ENCODE measurements at regions of chr9 and their contacts with region 1.

Region 1: DNA sequence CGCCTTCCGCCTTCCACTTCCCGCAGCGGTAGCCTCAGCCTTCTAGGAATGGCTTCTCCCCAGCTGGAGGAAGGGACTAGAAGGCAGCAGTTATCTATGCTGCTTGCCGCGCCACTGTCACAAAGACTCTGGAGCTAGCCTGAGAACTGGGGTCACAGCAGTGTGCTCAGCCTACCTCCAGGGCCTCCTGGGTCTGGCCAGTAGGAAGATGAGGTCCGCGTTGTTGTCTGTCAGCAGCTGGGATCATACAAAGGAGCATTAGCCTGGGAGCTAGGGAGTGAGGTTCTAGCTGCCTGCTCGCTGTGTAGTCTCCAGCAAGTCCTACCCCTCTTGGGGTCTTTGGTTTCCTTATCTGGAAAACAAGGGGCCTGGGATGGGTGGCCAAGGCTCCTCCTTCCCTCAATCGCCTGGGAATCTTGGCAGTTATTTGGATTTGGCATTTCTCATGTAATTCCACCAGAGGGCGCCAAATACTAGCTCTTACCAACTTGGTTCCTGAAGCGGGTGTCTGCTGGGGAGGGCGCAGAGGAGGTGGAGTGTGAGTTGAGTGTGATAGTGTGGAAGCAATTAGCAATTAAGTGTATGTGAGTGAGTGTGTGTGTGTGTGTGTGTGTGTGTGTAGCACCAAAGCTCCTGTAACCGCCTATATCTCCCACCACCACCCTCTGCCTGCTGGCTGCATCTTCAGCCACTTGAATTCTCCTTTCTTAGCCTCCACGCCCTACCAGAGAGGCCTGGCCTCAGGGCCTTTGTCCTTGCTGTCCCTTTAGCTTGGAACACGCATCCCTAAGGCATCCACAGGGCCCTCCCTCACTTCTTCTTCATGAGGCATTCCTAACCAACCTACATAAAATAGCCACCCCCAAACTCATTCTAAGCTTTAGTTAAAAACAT is 97.1 kb downstream of the ENTREP1 start:
- DNase-seq: peak; percentile 5
- H3K4me3 ChIP-seq: no peak overlapping the region
- H3K27me3 ChIP-seq: no peaks in the 10 kb centered on the region
- CTCF ChIP-seq: peak; percentile 65

Region 2: GRCh38 chr9:69382135-69382534 is 40.0 kb before region 1 on chr9:
- CTCF ChIA-PET with region 1: no interaction called
- POLR2A ChIA-PET with region 1: no interaction called
- DNase-seq: no peak
- H3K4me3 ChIP-seq: no peak overlapping the region
- H3K27me3 ChIP-seq: 0 out of 2 replicates have a peak, but pooled peaks cover 4% of the 10 kb centered on the region
- CTCF ChIP-seq: no peak

Region 3: DNA sequence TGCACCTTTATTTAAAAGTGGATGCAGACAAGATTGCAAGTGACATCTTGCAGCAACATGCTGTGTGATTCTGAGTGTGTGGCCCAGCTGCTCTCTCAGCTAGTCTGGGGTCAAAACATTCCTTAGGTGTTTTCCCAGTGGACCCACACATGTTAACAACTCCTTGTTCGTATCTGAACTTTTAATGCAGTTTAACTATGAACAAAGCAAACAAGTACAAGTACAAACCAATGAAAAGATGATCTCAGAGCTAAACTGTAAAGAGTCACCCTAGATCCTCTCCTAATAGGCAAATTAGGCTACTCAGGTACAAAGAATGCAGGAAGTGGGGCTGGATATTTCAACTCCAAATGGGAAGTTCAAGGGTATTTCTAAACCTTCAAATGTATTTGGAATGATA is 11.2 kb after region 1 on chr9:
- CTCF ChIA-PET with region 1: interaction called, 21 read pairs
- POLR2A ChIA-PET with region 1: no interaction called
- DNase-seq: peak; percentile 9
- H3K4me3 ChIP-seq: no peak overlapping the region
- H3K27me3 ChIP-seq: no peaks in the 10 kb centered on the region
- CTCF ChIP-seq: no peak

Region 4: GRCh38 chr9:69549310-69550202 is 127.4 kb after region 1 on chr9:
- CTCF ChIA-PET with region 1: interaction called, 98 read pairs
- POLR2A ChIA-PET with region 1: no interaction called
- DNase-seq: no peak
- H3K4me3 ChIP-seq: no peak overlapping the region
- H3K27me3 ChIP-seq: no peaks in the 10 kb centered on the region
- CTCF ChIP-seq: peak; percentile 86

Region 5: GRCh38 chr9:69672596-69673310 is 250.6 kb after region 1 on chr9:
- CTCF ChIA-PET with region 1: interaction called, 11 read pairs
- POLR2A ChIA-PET with region 1: no interaction called
- DNase-seq: no peak
- H3K4me3 ChIP-seq: peak overlapping the region; percentile 84
- H3K27me3 ChIP-seq: no peaks in the 10 kb centered on the region
- CTCF ChIP-seq: peak; percentile 91

Measured in BJ (cell line).